ENCODE measurements at regions of chr9 and their contacts with region 1.

Region 1: GRCh38 chr9:126804696-126805545 is at the start of gene ZBTB43:
- DNase-seq: peak; percentile 89
- ATAC-seq: peak; percentile 92
- H3K4me3 ChIP-seq: peak within 1 kb of the TSS; percentile 82
- H3K27ac ChIP-seq: peak within 1 kb of the TSS; percentile 60
- H3K4me1 ChIP-seq: no peaks in the 10 kb centered on the region; the same call in 1 of the 2 replicates
- H3K27me3 ChIP-seq: no peaks in the 10 kb centered on the region
- CTCF ChIP-seq: no peak
- EP300 ChIP-seq: no peak
- POLR2A ChIP-seq: peak; percentile 98
- RAD21 ChIP-seq: no peak
- polyA plus RNA-seq, gene ZBTB43: 2.4 to 5.3 TPM

Region 2: GRCh38 chr9:126833710-126834345 is 28.9 kb after region 1 on chr9:
- CTCF ChIA-PET with region 1: interaction called, 10 read pairs
- POLR2A ChIA-PET with region 1: interaction called, 26 read pairs
- RAD21 ChIA-PET with region 1: interaction called, 25 read pairs
- SMC1A ChIA-PET with region 1: interaction called, 35 read pairs
- in situ Hi-C with region 1: no loop called
- intact Hi-C with region 1: loop called (anchors 2 kb)
- DNase-seq: no peak
- ATAC-seq: no peak
- H3K4me3 ChIP-seq: no peak overlapping the region
- H3K27ac ChIP-seq: no peak overlapping the region
- H3K4me1 ChIP-seq: peaks cover 49% of the 10 kb centered on the region
- H3K27me3 ChIP-seq: no peaks in the 10 kb centered on the region
- CTCF ChIP-seq: no peak
- EP300 ChIP-seq: no peak
- POLR2A ChIP-seq: no peak
- RAD21 ChIP-seq: no peak

Region 3: DNA sequence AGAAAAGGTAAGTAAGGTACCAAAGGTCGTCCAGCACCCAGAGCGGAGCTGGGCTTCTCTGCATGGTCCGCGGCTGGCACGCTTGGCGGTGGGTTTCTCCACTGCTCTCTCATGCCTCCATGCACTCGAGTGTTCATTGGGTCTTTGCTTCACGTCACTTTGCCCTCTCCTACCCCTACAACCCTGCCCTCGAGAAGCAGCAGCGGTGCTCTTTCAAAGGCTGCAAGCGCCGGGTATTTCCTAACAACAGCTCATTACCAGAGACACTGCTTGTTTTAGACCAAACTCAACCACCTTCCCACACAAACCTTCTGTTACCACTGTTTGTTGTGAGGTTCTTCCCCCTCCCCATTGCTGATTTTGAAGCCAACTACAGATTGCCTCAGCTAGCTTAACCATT is 34.0 kb after region 1 on chr9:
- CTCF ChIA-PET with region 1: interaction called, 10 read pairs
- POLR2A ChIA-PET with region 1: interaction called, 26 read pairs
- RAD21 ChIA-PET with region 1: interaction called, 25 read pairs
- SMC1A ChIA-PET with region 1: interaction called, 35 read pairs
- in situ Hi-C with region 1: no loop called
- intact Hi-C with region 1: loop called (anchors 2 kb)
- DNase-seq: peak; percentile 81
- ATAC-seq: peak; percentile 84
- H3K4me3 ChIP-seq: no peak overlapping the region; the same call in 1 of the 2 replicates
- H3K27ac ChIP-seq: peak overlapping the region; percentile 91
- H3K4me1 ChIP-seq: peaks cover 65% of the 10 kb centered on the region
- H3K27me3 ChIP-seq: no peaks in the 10 kb centered on the region
- CTCF ChIP-seq: no peak
- EP300 ChIP-seq: peak; percentile 59 to 79; a peak in 3 of 4 replicates
- POLR2A ChIP-seq: no peak
- RAD21 ChIP-seq: no peak

Measured in GM12878 (cell line).